ENCODE measurements at regions of chr11 and their contacts with region 1.

Region 1: GRCh38 chr11:37124384-37124783 is 526.3 kb upstream of the RAG2 start:
- DNase-seq: no peak
- ATAC-seq: no peak
- H3K4me3 ChIP-seq: no peak overlapping the region
- H3K27ac ChIP-seq: no peak overlapping the region
- H3K4me1 ChIP-seq: no peaks in the 10 kb centered on the region
- H3K27me3 ChIP-seq: no peaks in the 10 kb centered on the region
- CTCF ChIP-seq: no peak

Region 2: GRCh38 chr11:36123346-36124101 is 1000.9 kb before region 1 on chr11:
- CTCF ChIA-PET with region 1: no interaction called
- POLR2A ChIA-PET with region 1: no interaction called
- in situ Hi-C with region 1: no loop called
- intact Hi-C with region 1: no loop called
- DNase-seq: no peak
- ATAC-seq: no peak
- H3K4me3 ChIP-seq: no peak overlapping the region
- H3K27ac ChIP-seq: 0 out of 2 replicates have a peak overlapping the region, but pooled peaks have one; percentile 27
- H3K4me1 ChIP-seq: peaks cover 31% of the 10 kb centered on the region
- H3K27me3 ChIP-seq: no peaks in the 10 kb centered on the region
- CTCF ChIP-seq: no peak

Region 3: GRCh38 chr11:37182031-37182430 is 57.6 kb after region 1 on chr11:
- CTCF ChIA-PET with region 1: no interaction called
- POLR2A ChIA-PET with region 1: no interaction called
- in situ Hi-C with region 1: no loop called
- intact Hi-C with region 1: loop called (anchors 10 kb)
- DNase-seq: no peak
- ATAC-seq: no peak
- H3K4me3 ChIP-seq: no peak overlapping the region
- H3K27ac ChIP-seq: no peak overlapping the region
- H3K4me1 ChIP-seq: no peaks in the 10 kb centered on the region
- H3K27me3 ChIP-seq: no peaks in the 10 kb centered on the region
- CTCF ChIP-seq: no peak

Region 4: DNA sequence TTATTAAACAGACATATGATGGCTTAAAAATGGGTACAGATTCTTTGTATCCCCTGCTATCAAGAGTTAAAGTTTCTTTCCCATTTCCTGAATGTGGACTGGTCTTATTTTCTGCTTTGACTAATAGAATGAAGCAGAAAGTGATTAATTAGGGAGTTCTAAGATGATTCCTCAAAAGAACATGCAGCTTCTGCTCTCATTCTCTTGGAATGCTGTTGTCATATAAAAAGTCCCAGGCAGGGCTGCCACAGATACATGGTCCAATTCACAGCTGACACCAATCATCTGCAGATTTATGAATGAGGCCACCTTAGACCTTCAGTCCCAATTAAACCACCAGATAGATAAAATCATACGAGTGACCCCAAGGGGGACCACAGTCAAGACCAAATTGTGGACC is 318.2 kb after region 1 on chr11:
- CTCF ChIA-PET with region 1: no interaction called
- POLR2A ChIA-PET with region 1: no interaction called
- in situ Hi-C with region 1: no loop called
- intact Hi-C with region 1: no loop called
- DNase-seq: no peak
- ATAC-seq: no peak
- H3K4me3 ChIP-seq: no peak overlapping the region
- H3K27ac ChIP-seq: no peak overlapping the region
- H3K4me1 ChIP-seq: no peaks in the 10 kb centered on the region
- H3K27me3 ChIP-seq: no peaks in the 10 kb centered on the region
- CTCF ChIP-seq: no peak